ENCODE measurements at regions of chr7 and their contacts with region 1.

Region 1: DNA sequence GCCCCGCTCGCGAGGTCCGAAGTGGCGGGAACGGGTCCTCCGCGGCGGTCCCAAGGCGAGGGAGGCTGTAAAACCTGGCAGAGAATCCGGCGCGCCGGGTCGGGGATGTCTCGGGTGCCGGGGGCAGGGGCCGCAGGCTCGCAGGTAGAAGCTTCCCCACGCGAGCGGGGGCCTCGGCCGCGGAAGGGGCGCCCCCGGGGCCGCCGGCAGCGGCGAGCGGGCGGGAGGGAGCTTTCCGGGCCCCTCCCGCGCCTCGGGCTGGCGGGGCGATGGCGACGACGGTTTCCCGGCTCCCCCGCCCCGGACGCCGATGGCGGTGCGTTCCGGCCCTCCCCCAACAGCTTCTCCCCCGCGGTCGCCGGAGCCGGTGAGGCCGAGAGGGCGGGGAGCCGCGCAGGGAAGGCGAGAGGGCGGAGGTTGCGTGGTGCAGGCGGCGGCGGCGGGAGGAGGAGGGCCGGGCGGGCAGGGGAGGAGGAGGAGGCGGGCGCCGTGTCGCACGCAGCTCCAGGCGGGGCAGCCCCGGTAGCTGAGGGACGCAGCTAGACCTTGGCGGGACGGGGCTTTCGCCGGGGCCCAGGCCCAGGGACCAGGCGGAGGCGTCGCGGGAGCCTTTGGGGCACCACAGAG is at the start of gene CUL1:
- DNase-seq: peak; percentile 89 to 92
- ATAC-seq: peak; percentile 86 to 94 (median 90)
- H3K4me3 ChIP-seq: peak within 1 kb of the TSS; percentile 50 to 97 (median 93)
- H3K27ac ChIP-seq: peak within 1 kb of the TSS; percentile 89 to 100 (median 96)
- H3K4me1 ChIP-seq: peaks cover 10 to 53% (median 45%) of the 10 kb centered on the region in 9 donors
- H3K27me3 ChIP-seq: no peaks in the 10 kb centered on the region
- CTCF ChIP-seq: no peak
- total RNA-seq, gene CUL1: 40.6 to 53.4 (median 45.0) TPM

Region 2: DNA sequence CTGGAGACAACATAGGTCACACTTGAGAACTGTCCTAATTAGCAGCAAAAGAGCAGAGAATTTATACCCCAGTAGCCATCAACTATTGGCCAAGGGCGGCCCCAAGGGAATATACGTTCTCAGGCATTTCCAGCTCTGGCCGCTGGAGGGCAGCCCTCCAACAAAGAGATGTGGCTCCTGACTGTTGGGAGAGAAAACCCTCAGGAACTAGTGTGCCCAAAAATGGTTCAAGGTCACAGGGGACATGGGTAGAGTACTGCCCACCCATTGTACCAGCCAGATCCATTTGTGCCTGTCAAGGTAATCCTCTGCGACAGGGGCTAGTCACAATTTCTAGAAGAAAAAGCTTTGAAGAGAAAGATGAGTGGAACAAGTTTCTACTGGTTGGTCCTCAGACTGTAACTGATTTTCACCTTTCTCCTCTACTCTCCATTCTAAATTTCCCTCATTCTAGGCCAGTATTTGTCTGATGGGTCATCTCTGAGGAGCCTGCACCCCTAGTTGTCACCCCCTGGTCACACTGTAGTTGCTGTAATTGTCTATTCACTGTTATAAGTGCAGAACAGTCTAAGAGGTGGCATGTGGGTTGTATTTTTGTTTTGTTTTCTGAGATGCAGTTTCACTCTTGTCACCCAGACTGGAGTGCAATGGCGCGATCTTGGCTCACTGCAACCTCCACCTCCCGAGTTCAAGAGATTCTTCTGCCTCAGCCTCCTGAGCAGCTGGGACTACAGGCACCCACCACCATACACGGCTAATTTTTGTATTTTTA is 122.7 kb before region 1 on chr7:
- intact Hi-C with region 1: loop called in 1 of 10 experiments (anchors 10 kb)
- DNase-seq: peak; percentile 47 to 63
- ATAC-seq: peak; percentile 55 to 81 (median 71)
- H3K4me3 ChIP-seq: no peak overlapping the region
- H3K27ac ChIP-seq: no peak overlapping the region
- H3K4me1 ChIP-seq: peaks cover 0 to 6% (median 0%) of the 10 kb centered on the region in 9 donors
- H3K27me3 ChIP-seq: no peaks in the 10 kb centered on the region
- CTCF ChIP-seq: peak; percentile 47 to 87 (median 80)

Region 3: DNA sequence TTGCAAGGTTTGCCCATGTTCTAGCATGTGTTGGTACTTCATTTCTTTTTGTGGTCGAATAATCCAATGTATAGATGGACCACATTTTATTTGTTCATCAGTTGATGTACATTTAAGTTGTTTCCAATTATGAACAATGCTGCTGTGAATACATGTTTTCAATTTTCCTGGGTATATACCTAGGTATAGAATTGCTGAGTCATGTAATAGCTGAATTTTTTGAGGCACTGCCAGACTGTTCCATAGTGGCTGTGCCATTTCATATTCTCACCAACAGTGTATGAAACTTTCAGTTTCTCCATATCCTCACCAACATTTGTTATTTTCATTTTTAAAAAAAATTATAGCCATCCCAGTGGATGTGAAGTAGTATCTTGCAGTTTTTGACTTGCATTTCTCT is 95.1 kb after region 1 on chr7:
- intact Hi-C with region 1: no loop called
- DNase-seq: no peak
- ATAC-seq: no peak
- H3K4me3 ChIP-seq: no peak overlapping the region
- H3K27ac ChIP-seq: no peak overlapping the region
- H3K4me1 ChIP-seq: no peaks in the 10 kb centered on the region
- H3K27me3 ChIP-seq: no peaks in the 10 kb centered on the region
- CTCF ChIP-seq: no peak

Region 4: GRCh38 chr7:148884299-148885022 is 186.0 kb after region 1 on chr7:
- intact Hi-C with region 1: loop called in 2 of 10 experiments (anchors 5 to 10 kb)
- DNase-seq: peak; percentile 93 to 94
- ATAC-seq: peak; percentile 99 to 100 (median 100)
- H3K4me3 ChIP-seq: peak overlapping the region; percentile 50 to 97 (median 94)
- H3K27ac ChIP-seq: peak overlapping the region; percentile 73 to 96 (median 93)
- H3K4me1 ChIP-seq: peaks cover 0 to 19% (median 8%) of the 10 kb centered on the region in 9 donors
- H3K27me3 ChIP-seq: no peaks in the 10 kb centered on the region
- CTCF ChIP-seq: peak in 1 of 9 donors; percentile 20

Region 5: DNA sequence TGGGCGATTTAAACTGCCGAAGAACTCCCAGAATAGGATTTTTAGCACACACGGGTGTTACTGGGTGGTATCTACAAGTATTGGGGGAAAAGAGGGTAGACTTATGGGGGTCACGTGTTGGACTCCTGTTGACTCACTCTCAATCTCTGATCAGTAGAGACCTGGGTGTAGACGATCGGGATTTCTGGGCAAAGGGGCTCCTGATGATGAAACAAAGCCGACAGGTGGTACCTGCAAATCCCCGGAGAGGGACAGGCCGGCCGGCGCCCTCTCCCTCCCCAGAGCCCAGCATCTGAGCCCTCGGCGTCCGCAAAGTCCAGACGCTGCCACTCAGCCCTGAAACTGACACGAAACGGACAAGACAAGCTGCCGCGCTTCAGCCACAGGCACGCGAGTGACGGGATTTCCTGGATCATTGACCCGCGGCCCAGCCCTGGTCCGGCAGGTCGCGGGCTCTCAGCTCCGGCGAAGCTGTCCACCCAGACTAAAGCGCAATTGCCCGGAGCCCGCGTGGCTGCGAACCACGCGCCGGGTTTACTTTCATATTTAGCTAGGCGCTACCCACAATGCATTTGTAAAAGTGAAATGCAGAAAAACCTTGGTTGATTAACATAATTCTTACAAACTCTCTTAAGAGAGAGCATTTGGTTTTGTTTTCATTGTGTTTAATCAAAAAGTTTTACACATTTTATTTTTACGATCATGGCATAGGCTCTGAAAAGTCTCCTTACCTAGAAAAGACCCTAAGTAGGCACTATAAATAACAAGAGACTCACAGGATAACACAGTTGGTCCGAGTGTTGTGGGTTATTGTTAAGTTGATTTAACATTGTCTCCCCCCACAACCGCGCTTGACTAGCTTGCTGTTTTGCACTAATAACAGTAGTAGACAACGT is 242.4 kb after region 1 on chr7:
- intact Hi-C with region 1: loop called in 1 of 10 experiments (anchors 10 kb)
- DNase-seq: peak; percentile 73 to 79
- ATAC-seq: peak; percentile 93 to 98 (median 97)
- H3K4me3 ChIP-seq: peak overlapping the region; percentile 33 to 99 (median 68)
- H3K27ac ChIP-seq: peak overlapping the region; percentile 9 to 93 (median 78)
- H3K4me1 ChIP-seq: peaks cover 0 to 19% (median 9%) of the 10 kb centered on the region in 9 donors
- H3K27me3 ChIP-seq: no peaks in the 10 kb centered on the region
- CTCF ChIP-seq: no peak

Measured in heart right ventricle (tissue), 16 donors.